Natural killer cell (primary cell): ENCODE measurements at regions of chr18 and their contacts with region 1.

Region 1: GRCh38 chr18:22813648-22814328 is 119.3 kb upstream of the RBBP8 start:
- DNase-seq: peak in 1 of 2 donors; percentile 45
- ATAC-seq: peak in 1 of 3 donors; percentile 63
- H3K4me3 ChIP-seq: no peak overlapping the region
- H3K4me3 Mint-ChIP-seq: no peak overlapping the region
- H3K27ac ChIP-seq: no peak overlapping the region
- H3K27ac Mint-ChIP-seq: no peak overlapping the region
- H3K4me1 ChIP-seq: no peaks in the 10 kb centered on the region
- H3K4me1 Mint-ChIP-seq: no peaks in the 10 kb centered on the region
- H3K27me3 ChIP-seq: peaks cover 2% of the 10 kb centered on the region
- H3K27me3 Mint-ChIP-seq: peaks cover 11 to 47% of the 10 kb centered on the region in 2 donors
- CTCF ChIP-seq: peak; percentile 37

Region 2: GRCh38 chr18:22983175-22983574 is 169.4 kb after region 1 on chr18:
- intact Hi-C with region 1: loop called (anchors 1 kb)
- DNase-seq: peak in 1 of 2 donors; percentile 48
- ATAC-seq: peak in 1 of 3 donors; percentile 52
- H3K4me3 ChIP-seq: no peak overlapping the region
- H3K4me3 Mint-ChIP-seq: no peak overlapping the region
- H3K27ac ChIP-seq: no peak overlapping the region
- H3K27ac Mint-ChIP-seq: no peak overlapping the region
- H3K4me1 ChIP-seq: no peaks in the 10 kb centered on the region
- H3K4me1 Mint-ChIP-seq: no peaks in the 10 kb centered on the region
- H3K27me3 ChIP-seq: no peaks in the 10 kb centered on the region
- H3K27me3 Mint-ChIP-seq: no peaks in the 10 kb centered on the region
- CTCF ChIP-seq: peak; percentile 59

Region 3: DNA sequence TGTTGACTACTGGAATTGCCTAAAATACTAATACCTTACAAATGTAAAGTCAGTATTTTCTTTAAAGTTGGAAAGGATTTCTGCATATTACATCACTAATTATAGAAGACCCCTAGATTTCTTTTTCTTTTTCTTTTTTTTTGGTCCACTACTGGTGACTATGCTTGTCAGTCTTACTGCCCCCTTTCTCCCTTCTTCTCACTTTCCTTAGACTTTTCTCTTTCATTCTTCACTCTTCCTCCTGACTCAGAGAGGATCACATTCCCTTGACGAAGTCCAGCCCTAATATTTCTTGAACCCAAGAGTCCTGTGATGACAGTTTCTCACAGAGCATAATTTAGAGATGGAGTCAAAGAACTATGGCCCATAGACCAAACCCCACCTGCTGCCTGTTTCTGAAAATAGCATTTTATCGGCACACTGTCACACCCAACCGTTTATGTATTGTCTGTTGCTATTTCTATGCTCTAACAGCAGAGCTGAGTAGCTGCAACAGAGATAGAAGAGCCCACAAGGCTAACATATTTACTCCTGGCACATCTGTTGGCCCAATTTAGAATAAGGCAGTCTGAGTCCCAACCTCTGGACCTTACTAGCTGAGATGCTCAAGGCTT is 598.7 kb after region 1 on chr18:
- intact Hi-C with region 1: loop called (anchors 5 kb)
- DNase-seq: no peak
- ATAC-seq: no peak
- H3K4me3 ChIP-seq: no peak overlapping the region
- H3K4me3 Mint-ChIP-seq: no peak overlapping the region
- H3K27ac ChIP-seq: no peak overlapping the region
- H3K27ac Mint-ChIP-seq: no peak overlapping the region
- H3K4me1 ChIP-seq: no peaks in the 10 kb centered on the region
- H3K4me1 Mint-ChIP-seq: peaks cover 0 to 7% of the 10 kb centered on the region in 2 donors
- H3K27me3 ChIP-seq: no peaks in the 10 kb centered on the region
- H3K27me3 Mint-ChIP-seq: no peaks in the 10 kb centered on the region
- CTCF ChIP-seq: no peak